Heart right ventricle (tissue), 16 donors: ENCODE measurements at regions of chr14 and their contacts with region 1.

Region 1: DNA sequence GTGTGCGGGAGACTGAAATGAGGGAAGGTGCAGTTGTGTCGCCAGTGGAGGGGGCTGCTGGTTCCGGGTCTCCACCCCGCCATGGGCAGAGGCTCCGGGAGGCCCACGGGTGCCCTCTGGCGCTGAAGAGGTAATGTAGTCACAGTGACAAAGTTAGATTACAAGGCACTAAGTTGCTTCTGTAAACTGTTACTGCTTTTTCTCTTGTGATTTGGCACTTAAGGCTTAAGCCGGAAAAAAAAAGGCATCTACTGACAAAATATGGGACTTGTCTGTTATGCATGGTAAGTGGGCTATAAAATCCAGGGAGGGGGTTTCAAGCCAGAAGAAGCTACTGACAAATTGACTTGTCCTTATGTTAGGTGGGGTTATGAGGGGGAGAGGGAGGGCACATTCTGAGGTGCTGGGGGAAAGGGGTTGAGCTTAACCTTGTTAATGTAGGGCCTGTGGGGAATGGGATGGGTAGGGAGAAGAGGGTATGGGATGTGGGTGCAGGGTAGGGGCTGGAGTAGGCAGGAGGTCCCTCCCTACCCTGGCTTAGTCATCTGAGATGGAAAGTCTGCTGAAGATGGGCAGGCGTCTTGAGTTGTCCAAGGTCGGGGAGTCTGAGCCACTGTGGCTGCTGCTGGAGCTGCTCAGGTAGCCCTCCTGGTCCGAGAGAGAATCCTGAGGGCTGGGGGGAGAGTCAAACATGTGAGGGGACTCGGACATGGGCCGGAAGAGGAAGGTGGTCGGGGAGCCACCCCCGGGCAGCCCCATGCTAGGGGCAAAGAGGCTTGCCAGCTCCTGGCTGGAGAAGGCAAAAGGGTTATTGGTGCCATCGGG is 3.7 kb downstream of the ZFP36L1 start:
- DNase-seq: peak; percentile 85 to 88
- ATAC-seq: peak in 7 of 8 donors; percentile 13 to 50 (median 28)
- H3K4me3 ChIP-seq: peak overlapping the region; percentile 60 to 93 (median 88)
- H3K27ac ChIP-seq: peak overlapping the region; percentile 99 to 100 (median 100)
- H3K4me1 ChIP-seq: peaks cover 0 to 58% (median 32%) of the 10 kb centered on the region in 9 donors
- H3K27me3 ChIP-seq: no peaks in the 10 kb centered on the region
- CTCF ChIP-seq: peak; percentile 63 to 86 (median 72)

Region 2: GRCh38 chr14:67908052-67908754 is 881.0 kb before region 1 on chr14:
- intact Hi-C with region 1: no loop called
- DNase-seq: no peak
- ATAC-seq: no peak
- H3K4me3 ChIP-seq: no peak overlapping the region
- H3K27ac ChIP-seq: no peak overlapping the region
- H3K4me1 ChIP-seq: peaks cover 0 to 11% (median 0%) of the 10 kb centered on the region in 9 donors
- H3K27me3 ChIP-seq: no peaks in the 10 kb centered on the region
- CTCF ChIP-seq: no peak

Region 3: DNA sequence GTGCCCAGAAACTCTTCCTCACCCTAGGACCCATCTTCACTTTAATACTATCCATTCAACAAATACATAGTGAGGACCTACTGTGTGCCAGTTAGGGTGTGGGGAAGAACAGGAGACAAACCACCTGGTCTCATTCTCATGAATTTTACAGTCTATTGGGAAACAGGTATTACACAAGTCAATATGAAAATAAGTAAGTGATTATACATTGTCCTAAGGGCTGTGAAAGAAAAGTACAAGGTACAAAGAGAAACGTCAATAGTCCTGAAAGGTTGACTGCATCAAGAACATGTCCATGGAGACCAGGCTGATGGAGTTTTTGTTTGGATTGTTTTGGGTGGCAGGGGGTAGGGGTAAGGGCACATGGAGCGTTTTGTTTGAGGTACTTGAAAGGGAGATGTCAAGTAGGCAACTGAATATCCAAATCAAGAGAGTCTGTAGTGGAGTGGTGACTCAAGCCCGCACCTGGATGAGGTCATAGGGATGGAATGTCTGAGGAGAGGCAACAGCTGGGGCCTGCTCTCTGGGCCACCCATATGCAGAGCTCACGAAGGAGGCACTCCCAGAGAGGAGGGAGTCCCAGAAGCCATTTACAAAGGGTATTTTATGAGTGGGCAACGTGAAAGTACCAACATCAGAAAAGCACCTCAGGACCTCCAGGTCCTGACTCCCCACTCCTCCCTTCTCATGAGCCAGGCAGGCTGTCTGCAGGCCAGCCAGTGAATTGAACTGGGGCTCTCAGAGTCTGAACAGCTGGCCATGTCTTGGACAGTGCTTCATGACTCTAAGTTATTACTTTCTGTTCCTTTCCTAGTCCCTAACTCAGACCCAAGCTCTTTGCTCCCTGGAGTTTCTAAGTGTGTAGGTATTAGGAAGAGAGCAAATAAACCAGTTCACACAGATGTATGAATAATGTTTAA is 268.3 kb before region 1 on chr14:
- intact Hi-C with region 1: loop called in 6 of 10 experiments (anchors 5 to 10 kb)
- DNase-seq: no peak
- ATAC-seq: peak in 2 of 8 donors; percentile 25 to 48
- H3K4me3 ChIP-seq: no peak overlapping the region
- H3K27ac ChIP-seq: peak overlapping the region in 7 of 10 donors; percentile 33 to 73 (median 67)
- H3K4me1 ChIP-seq: peaks cover 0 to 79% (median 58%) of the 10 kb centered on the region in 9 donors
- H3K27me3 ChIP-seq: no peaks in the 10 kb centered on the region
- CTCF ChIP-seq: no peak

Region 4: DNA sequence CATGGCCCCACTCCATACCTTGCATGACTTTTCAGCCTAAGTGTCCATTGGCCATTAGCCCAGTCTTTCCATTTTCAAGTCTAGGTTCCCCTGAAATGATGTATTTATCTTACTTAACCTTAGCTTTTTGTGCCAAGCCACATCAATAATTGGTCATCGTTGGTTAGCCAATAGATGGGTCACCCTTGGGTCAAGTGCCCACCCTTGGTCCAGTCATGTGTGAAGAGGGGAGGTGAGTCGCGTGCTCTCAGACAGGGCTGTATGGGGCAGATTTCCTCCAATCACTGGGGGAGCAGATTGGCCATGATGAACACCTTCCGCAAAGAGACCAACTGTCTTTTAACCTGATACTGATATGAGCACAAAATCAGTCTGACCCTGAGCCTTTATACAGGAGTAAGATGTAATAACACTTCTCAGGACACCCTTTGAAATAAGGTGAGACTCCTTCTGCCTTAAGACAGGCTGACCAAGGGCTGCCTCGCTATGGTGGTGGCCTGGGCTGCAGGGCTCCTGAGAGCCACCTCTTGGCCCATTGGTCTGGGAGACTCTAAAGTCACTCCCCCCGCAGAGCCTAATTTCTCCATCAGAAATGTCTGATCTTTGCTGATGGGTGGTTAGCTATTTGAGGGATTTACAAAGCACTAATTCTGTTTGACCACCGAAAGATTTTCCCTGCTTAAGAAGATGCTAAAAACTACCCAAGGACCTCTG is 139.6 kb before region 1 on chr14:
- intact Hi-C with region 1: no loop called
- DNase-seq: no peak
- ATAC-seq: no peak
- H3K4me3 ChIP-seq: no peak overlapping the region
- H3K27ac ChIP-seq: no peak overlapping the region
- H3K4me1 ChIP-seq: peaks cover 6 to 52% (median 42%) of the 10 kb centered on the region in 9 donors
- H3K27me3 ChIP-seq: no peaks in the 10 kb centered on the region
- CTCF ChIP-seq: no peak

Region 5: GRCh38 chr14:68685419-68686204 is 103.6 kb before region 1 on chr14:
- intact Hi-C with region 1: loop called in 5 of 10 experiments (anchors 2 to 10 kb)
- DNase-seq: no peak
- ATAC-seq: no peak
- H3K4me3 ChIP-seq: no peak overlapping the region
- H3K27ac ChIP-seq: peak overlapping the region in 5 of 10 donors; percentile 25 to 96 (median 85)
- H3K4me1 ChIP-seq: peaks cover 23 to 69% (median 47%) of the 10 kb centered on the region in 9 donors
- H3K27me3 ChIP-seq: no peaks in the 10 kb centered on the region
- CTCF ChIP-seq: no peak

Region 6: GRCh38 chr14:68727315-68728047 is 61.7 kb before region 1 on chr14:
- intact Hi-C with region 1: loop called in 4 of 10 experiments (anchors 5 kb)
- DNase-seq: peak in 1 of 2 donors; percentile 52
- ATAC-seq: peak; percentile 49 to 82 (median 76)
- H3K4me3 ChIP-seq: no peak overlapping the region
- H3K27ac ChIP-seq: peak overlapping the region in 7 of 10 donors; percentile 7 to 77 (median 23)
- H3K4me1 ChIP-seq: peaks cover 16 to 69% (median 50%) of the 10 kb centered on the region in 9 donors
- H3K27me3 ChIP-seq: no peaks in the 10 kb centered on the region
- CTCF ChIP-seq: no peak

Region 7: GRCh38 chr14:68734231-68734775 is 54.9 kb before region 1 on chr14:
- intact Hi-C with region 1: loop called in 4 of 10 experiments (anchors 5 kb)
- DNase-seq: no peak
- ATAC-seq: peak in 2 of 8 donors; percentile 3
- H3K4me3 ChIP-seq: no peak overlapping the region
- H3K27ac ChIP-seq: peak overlapping the region in 4 of 10 donors; percentile 5 to 91 (median 60)
- H3K4me1 ChIP-seq: peaks cover 12 to 77% (median 66%) of the 10 kb centered on the region in 9 donors
- H3K27me3 ChIP-seq: peaks cover 0 to 7% (median 0%) of the 10 kb centered on the region in 7 donors
- CTCF ChIP-seq: no peak